ENCODE measurements at regions of chr20 and their contacts with region 1.

Region 1: DNA sequence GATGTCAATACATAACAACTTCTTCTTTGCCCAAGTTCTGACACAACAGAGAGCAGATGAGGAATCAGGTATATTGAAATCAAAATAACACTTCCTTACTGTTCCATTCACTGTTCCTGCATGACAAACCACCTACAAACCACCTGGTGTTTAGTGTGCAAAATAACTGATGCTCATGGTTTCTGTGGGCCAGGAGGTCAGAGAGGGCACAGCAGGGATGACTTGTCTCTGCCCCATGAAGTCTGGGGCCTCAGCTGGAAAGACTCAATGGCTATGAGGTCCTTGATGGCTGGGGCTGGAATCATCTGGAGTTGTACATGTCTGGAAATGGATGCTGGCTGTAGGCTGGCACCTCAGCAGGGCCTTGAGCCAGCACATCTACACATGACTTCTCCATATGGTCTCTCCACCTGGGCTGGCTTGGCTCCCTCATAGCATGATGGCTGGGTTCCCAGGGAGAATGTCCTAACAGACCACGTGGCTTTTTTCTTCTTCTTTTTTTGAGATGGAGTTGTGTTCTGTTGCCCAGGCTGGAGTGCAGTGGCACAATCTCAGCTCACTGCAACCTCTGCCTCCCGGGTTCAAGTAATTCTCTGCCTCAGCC is 7.4 kb upstream of the COX4I2 start:
- DNase-seq: no peak
- H3K4me3 ChIP-seq: no peak overlapping the region
- CTCF ChIP-seq: no peak

Region 2: DNA sequence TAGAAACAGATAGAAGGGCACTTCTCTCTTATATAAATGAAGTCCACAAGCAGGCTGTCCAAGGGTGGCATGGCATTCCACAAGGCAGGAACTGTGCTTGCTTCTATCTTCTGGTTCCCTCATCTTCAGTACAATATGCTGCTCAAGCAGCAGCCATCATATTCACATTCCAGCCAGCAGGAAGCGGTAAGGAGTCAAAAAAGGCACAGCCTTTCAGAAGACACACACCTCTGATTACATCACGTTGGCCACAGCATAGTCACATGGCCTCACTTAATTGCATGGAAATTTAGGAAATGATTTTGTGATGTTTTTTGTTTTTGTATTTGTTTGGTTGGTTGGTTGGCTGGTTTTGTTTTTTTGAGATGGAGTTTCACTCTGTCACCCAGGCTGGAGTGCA is 136.2 kb before region 1 on chr20:
- CTCF ChIA-PET with region 1: no interaction called
- POLR2A ChIA-PET with region 1: no interaction called
- DNase-seq: no peak
- H3K4me3 ChIP-seq: no peak overlapping the region
- CTCF ChIP-seq: peak; percentile 38

Region 3: GRCh38 chr20:31605031-31605901 is 25.0 kb before region 1 on chr20 and contains the start of gene ID1:
- CTCF ChIA-PET with region 1: interaction called, 76 read pairs
- POLR2A ChIA-PET with region 1: no interaction called
- DNase-seq: no peak
- H3K4me3 ChIP-seq: peak within 1 kb of the TSS; percentile 88
- CTCF ChIP-seq: no peak

Region 4: GRCh38 chr20:31644701-31645100 is 14.4 kb after region 1 on chr20:
- CTCF ChIA-PET with region 1: interaction called, 149 read pairs
- POLR2A ChIA-PET with region 1: no interaction called
- DNase-seq: no peak
- H3K4me3 ChIP-seq: no peak overlapping the region
- CTCF ChIP-seq: no peak

Region 5: DNA sequence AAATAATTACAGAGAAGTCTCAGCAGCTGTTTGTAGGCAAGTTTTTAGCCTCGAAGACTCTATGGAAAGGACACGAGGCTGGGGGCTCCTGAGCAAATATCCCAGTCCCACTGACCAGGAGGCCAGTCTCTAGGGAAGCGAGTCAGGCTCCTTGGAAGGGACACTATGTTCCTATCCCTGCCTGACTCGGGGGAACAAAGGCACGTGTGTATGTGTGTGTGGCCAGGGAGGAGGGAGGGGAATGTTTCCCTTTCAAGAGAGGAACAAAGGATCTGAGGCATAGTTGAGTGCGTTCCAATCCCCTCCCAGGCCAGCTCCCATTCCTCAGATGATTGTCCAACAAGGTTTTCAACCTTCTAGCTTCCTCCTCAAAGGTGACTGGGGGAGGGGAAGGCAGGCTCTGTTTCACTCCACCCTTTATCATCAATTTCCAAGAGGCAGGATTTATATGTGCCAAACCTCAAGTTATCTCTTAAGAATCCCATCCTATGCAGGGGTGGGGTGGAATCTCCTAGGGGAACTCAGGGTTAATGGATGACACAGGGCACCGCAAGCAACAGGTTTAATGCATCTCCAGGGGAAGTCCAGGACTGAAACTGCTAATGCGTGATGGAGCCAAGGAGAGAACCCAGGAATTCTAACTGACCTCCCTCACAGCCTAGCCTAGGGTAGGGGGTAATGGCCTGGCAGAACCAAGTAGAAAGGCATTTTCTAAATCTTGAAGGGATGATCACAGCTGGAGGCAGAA is 82.4 kb after region 1 on chr20:
- CTCF ChIA-PET with region 1: interaction called, 15 read pairs
- POLR2A ChIA-PET with region 1: no interaction called
- DNase-seq: no peak
- H3K4me3 ChIP-seq: peak overlapping the region; percentile 43
- CTCF ChIP-seq: no peak

Region 6: DNA sequence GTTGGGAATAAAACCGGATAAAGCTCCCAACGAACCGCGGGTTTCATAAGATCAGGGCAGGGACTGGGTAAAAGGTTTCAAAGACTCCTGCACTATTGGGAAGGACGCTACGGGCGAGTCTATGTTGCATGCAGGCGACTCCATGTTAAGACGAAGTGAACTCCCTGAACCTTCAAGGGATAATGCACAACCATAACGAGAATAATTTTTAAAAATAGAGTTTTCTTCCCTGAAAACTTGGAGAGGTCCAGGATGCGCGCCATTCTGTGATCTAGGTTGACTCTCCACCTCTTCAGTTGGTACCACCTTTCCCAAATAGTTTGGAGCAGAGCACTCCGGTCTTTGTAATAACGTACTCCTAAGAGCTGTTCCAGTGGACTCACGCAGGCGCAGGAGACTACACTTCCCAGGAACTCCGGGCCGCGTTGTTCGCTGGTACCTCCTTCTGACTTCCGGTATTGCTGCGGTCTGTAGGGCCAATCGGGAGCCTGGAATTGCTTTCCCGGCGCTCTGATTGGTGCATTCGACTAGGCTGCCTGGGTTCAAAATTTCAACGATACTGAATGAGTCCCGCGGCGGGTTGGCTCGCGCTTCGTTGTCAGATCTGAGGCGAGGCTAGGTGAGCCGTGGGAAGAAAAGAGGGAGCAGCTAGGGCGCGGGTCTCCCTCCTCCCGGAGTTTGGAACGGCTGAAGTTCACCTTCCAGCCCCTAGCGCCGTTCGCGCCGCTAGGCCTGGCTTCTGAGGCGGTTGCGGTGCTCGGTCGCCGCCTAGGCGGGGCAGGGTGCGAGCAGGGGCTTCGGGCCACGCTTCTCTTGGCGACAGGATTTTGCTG is 108.7 kb after region 1 on chr20 and contains the start of gene TPX2:
- CTCF ChIA-PET with region 1: interaction called, 13 read pairs
- POLR2A ChIA-PET with region 1: no interaction called
- DNase-seq: peak; percentile 83
- H3K4me3 ChIP-seq: peak within 1 kb of the TSS; percentile 97
- CTCF ChIP-seq: peak; percentile 12

Measured in AG04449 (cell line).